Caco-2 (cell line): ENCODE measurements at regions of chr16 and their contacts with region 1.

Region 1: DNA sequence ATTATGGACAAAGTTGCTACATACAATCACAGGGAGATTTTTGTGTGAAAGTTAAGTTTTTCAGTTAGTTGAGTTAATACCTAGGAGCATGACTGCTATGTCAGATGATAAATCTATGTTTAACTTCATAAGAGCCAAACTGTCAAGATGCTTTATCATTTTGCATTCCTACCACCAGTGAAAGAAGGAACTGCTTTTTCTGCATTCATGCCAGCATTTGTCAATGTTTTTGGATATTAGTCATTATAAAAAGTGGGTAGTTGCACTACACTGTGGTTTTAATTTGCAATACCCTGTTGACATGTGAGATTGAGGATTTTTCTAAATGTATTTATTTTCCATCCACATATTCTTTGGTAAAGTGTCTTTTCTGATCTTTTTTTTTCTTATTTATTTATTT is 434.0 kb upstream of the MON1B start:
- DNase-seq: no peak
- H3K4me3 ChIP-seq: no peak overlapping the region
- H3K4me3 Mint-ChIP-seq: no peak overlapping the region
- H3K27ac Mint-ChIP-seq: no peak overlapping the region
- H3K4me1 ChIP-seq: no peaks in the 10 kb centered on the region
- H3K4me1 Mint-ChIP-seq: no peaks in the 10 kb centered on the region
- H3K27me3 ChIP-seq: no peaks in the 10 kb centered on the region
- H3K27me3 Mint-ChIP-seq: peaks cover 2% of the 10 kb centered on the region
- CTCF ChIP-seq: no peak

Region 2: DNA sequence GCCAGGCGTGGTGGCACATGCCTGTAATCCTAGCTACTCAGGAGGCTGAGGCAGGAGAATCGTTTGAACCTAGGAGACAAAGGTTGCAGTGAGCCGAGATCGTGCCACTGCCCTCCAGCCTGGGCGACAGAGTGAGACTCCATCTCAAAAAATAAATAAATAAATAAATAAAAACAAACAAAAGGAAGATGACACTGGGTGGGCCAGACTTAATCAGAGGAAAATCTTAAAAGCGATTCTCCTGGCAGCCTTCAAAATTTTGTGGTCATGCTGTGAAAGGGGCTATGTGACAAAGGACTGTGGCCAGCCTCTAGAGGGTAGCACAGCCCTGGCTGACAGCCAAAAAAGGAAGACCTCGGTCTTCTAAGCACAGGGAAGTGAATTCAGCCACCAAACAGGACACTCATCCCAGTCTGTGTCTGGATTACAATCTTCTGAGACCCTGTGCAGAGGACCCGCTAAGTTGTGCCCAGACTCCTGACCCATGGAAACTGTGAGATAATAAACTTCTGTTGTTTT is 88.7 kb before region 1 on chr16:
- CTCF ChIA-PET with region 1: no interaction called
- POLR2A ChIA-PET with region 1: no interaction called
- intact Hi-C with region 1: no loop called
- DNase-seq: peak; percentile 65 to 67
- H3K4me3 ChIP-seq: no peak overlapping the region
- H3K4me3 Mint-ChIP-seq: no peak overlapping the region
- H3K27ac Mint-ChIP-seq: no peak overlapping the region
- H3K4me1 ChIP-seq: no peaks in the 10 kb centered on the region
- H3K4me1 Mint-ChIP-seq: no peaks in the 10 kb centered on the region
- H3K27me3 ChIP-seq: no peaks in the 10 kb centered on the region; the same call in none of the 2 replicates
- H3K27me3 Mint-ChIP-seq: peaks cover 7% of the 10 kb centered on the region
- CTCF ChIP-seq: peak; percentile 54 to 85

Region 3: DNA sequence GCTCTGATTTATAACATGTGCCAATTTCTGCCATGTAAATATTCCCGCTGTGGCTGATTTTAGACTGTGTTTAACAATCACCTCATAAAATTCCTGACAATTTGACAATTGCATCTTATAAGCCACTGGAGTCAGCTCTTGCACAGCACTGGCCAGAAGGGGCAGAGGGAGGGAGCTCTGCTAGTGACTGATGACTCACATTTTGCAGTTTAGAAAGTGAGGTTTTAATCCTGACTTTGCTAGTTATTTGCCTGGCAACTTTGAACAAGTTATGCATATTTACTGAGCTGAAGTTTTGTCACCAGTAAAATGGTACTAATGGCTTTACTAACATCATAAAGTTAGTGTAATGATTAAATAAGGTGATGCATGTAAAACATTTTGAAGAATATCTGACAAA is 27.4 kb before region 1 on chr16:
- CTCF ChIA-PET with region 1: no interaction called
- POLR2A ChIA-PET with region 1: no interaction called
- intact Hi-C with region 1: loop called (anchors 1 kb)
- DNase-seq: peak; percentile 26 to 46
- H3K4me3 ChIP-seq: no peak overlapping the region
- H3K4me3 Mint-ChIP-seq: no peak overlapping the region
- H3K27ac Mint-ChIP-seq: no peak overlapping the region
- H3K4me1 ChIP-seq: no peaks in the 10 kb centered on the region
- H3K4me1 Mint-ChIP-seq: no peaks in the 10 kb centered on the region
- H3K27me3 ChIP-seq: no peaks in the 10 kb centered on the region
- H3K27me3 Mint-ChIP-seq: peaks cover 10% of the 10 kb centered on the region
- CTCF ChIP-seq: no peak